ENCODE measurements at regions of chr1 and their contacts with region 1.

Region 1: GRCh38 chr1:27392096-27392777 is at the start of gene GPR3:
- DNase-seq: peak; percentile 82 to 95 (median 88)
- ATAC-seq: peak; percentile 97
- H3K4me3 ChIP-seq: peak within 1 kb of the TSS; percentile 57
- H3K4me3 Mint-ChIP-seq: peak within 1 kb of the TSS; percentile 76 to 90 (median 83)
- H3K27ac ChIP-seq: peak within 1 kb of the TSS; percentile 64
- H3K27ac Mint-ChIP-seq: peak within 1 kb of the TSS; percentile 54 to 98 (median 84)
- H3K4me1 ChIP-seq: peaks cover 9 to 18% of the 10 kb centered on the region in 2 donors
- H3K4me1 Mint-ChIP-seq: peaks cover 12 to 27% (median 20%) of the 10 kb centered on the region in 7 donors
- H3K27me3 ChIP-seq: no peaks in the 10 kb centered on the region
- H3K27me3 Mint-ChIP-seq: peaks cover 0 to 16% (median 0%) of the 10 kb centered on the region in 5 donors
- total RNA-seq, gene GPR3: 0.24 to 0.93 (median 0.45) TPM in 3 of 5 experiments, not detected in the others

Region 2: DNA sequence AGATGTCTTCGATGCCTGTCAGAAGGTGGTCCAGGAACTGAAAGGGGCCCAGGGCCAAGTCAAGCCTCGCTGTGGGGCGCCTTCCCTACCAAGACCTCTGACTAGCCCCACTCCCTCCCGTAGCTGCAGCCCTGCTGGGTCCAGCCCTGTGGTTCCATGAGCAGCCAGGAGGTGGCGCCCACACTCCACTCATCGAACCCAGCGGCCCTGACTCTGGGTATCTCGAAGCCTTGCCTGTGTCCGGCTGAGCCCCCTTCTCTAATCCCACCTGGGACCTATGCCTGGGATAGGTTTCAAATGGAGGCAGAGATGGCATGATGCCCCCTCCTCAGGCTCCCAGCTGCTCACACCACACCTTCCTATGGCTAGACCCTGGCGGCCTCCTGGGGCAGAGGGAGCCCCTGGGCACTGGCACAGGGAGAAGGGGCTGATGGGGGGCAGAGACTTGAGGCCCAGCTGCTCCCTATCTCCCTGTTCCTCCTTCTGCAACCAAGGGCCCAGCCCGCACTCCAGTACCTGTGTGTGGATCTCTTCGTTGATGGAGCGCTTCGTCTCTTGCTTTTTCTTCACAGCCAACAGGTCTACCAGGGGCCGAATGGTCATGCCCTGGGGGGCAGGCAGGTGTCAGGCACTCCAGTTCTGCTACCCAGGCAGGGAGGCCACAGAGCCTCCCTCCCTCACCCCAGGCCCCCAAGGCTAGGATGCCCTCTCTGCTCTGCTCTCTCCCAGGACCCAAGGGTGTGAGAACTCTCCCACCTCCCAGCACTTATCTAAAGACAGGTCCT is 289.3 kb before region 1 on chr1:
- CTCF ChIA-PET with region 1: interaction called, 4 read pairs
- POLR2A ChIA-PET with region 1: no interaction called
- intact Hi-C with region 1: loop called (anchors 2 to 5 kb)
- DNase-seq: peak; percentile 54 to 87 (median 76)
- ATAC-seq: peak; percentile 75
- H3K4me3 ChIP-seq: no peak overlapping the region
- H3K4me3 Mint-ChIP-seq: no peak overlapping the region
- H3K27ac ChIP-seq: no peak overlapping the region
- H3K27ac Mint-ChIP-seq: peak overlapping the region in 2 of 9 donors; percentile 45 to 57
- H3K4me1 ChIP-seq: no peaks in the 10 kb centered on the region
- H3K4me1 Mint-ChIP-seq: peaks cover 0 to 21% (median 3%) of the 10 kb centered on the region in 7 donors
- H3K27me3 ChIP-seq: no peaks in the 10 kb centered on the region
- H3K27me3 Mint-ChIP-seq: no peaks in the 10 kb centered on the region

Region 3: DNA sequence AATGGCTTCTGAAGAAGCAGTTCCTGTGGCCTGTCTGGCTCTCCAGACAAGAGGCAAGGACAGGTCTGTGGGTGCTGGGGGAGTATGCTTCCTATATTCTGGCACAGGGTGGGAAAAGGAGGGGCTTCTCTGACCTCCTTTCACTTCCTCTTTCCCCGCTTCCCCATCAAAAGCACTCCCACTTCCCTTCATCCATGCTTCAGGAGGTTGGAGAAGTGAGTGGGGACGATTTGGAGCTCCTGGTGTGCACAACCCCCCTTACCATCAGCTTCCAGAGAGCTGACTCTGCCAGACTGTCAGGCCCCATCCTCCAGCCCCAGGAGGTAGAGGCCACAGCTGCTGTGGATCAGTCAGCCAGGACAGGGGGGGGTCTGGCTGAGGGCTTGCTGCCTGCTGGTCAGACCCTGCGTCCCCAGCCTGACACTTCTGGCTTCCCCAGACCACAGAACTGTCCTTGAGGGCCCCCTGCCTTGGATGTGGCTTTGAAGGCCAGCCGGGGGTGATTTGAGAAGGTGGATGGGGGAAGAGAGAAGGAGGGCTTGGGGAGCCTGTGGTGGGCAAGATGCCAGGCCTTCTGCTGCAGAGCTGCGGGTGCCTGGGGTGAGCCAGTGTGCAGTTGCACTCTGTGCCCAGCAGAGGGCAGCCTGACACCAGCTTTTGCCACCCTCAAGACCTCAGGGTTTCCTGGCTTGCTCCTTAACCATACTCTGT is 91.7 kb before region 1 on chr1:
- CTCF ChIA-PET with region 1: interaction called, 184 read pairs
- POLR2A ChIA-PET with region 1: interaction called, 6 read pairs
- intact Hi-C with region 1: loop called (anchors 1 kb)
- DNase-seq: peak; percentile 66 to 84 (median 76)
- ATAC-seq: peak; percentile 95
- H3K4me3 ChIP-seq: no peak overlapping the region
- H3K4me3 Mint-ChIP-seq: no peak overlapping the region
- H3K27ac ChIP-seq: no peak overlapping the region
- H3K27ac Mint-ChIP-seq: no peak overlapping the region
- H3K4me1 ChIP-seq: no peaks in the 10 kb centered on the region
- H3K4me1 Mint-ChIP-seq: peaks cover 0 to 9% (median 3%) of the 10 kb centered on the region in 7 donors
- H3K27me3 ChIP-seq: no peaks in the 10 kb centered on the region
- H3K27me3 Mint-ChIP-seq: no peaks in the 10 kb centered on the region

Region 4: DNA sequence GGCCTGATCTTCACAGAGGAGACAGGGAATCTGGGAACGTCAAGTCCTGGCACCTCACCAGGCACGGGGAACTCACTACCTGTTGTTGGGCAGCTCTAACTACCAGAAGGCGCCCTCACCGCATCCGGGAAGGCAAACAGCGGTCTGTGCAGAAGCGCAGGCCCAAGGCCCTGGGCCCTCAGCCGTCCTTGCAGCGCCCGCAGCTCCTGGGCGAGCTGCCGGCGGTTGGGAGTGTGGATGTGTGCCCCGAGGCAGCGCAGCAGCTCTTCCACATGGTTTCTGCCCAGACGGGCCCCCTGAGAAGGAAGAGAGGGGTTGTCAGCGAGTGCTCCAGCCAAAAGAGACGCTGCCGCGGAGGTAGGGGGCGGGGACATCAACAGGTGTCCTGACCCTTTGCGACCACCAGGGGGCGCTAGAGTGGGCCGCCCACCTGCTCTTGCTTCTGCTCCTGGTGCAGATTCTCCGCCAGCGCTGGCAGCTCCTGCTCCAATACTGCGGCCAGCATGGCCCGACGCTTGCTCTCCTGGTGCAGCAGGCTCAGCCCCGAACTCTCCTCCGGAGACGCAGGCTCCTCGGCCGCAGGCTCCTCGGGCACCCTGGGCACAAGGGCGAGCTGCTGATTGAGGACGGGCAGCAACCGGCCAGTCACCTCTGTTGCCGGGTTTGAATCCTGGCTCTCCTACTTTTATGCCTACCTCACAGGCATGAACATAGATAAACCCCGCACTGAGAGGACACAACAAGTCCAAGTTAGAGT is 34.8 kb before region 1 on chr1:
- CTCF ChIA-PET with region 1: interaction called, 20 read pairs
- POLR2A ChIA-PET with region 1: no interaction called
- intact Hi-C with region 1: loop called (anchors 1 kb)
- DNase-seq: peak; percentile 76 to 89 (median 85)
- ATAC-seq: peak; percentile 94
- H3K4me3 ChIP-seq: peak overlapping the region; percentile 76
- H3K4me3 Mint-ChIP-seq: peak overlapping the region; percentile 74 to 88 (median 80)
- H3K27ac ChIP-seq: peak overlapping the region; percentile 70
- H3K27ac Mint-ChIP-seq: peak overlapping the region; percentile 62 to 90 (median 88)
- H3K4me1 ChIP-seq: peaks cover 37 to 41% of the 10 kb centered on the region in 2 donors
- H3K4me1 Mint-ChIP-seq: peaks cover 23 to 56% (median 45%) of the 10 kb centered on the region in 7 donors
- H3K27me3 ChIP-seq: no peaks in the 10 kb centered on the region
- H3K27me3 Mint-ChIP-seq: no peaks in the 10 kb centered on the region

Region 5: DNA sequence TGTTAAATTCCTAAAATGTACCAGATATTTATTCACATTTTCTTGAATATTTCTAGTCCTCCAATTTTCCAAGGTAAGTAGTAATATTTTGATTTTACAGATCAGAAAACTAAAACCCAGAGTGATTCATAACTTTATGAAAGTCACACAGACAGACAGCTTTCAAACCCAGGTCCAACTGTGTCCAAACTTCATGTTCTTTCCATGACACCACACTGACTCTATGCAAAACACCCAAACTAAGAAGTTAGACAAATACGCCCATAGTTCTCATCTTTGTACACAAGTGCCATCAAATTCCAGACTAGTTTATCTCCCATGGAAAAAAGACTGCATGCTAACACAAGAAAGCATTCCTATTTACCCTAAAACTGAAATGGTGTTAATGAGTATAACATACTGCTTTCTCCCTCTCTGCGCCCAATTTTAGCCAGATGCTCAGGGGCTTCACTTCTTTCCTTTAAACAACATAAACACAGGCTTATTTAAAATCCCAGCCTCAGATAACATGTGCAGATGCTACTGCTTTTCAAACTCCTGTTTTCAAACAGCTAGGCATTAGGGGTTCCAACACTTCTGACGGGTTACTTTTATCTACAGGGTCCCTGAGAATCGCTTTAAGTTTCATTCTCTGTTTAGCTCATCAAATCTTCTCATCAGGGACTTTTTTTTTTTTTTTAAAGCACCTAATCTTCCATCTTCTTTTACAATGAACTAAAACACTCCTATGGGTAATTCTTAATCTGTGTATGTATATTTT is 53.1 kb after region 1 on chr1:
- CTCF ChIA-PET with region 1: no interaction called
- POLR2A ChIA-PET with region 1: no interaction called
- intact Hi-C with region 1: no loop called
- DNase-seq: no peak
- ATAC-seq: peak; percentile 56
- H3K4me3 ChIP-seq: no peak overlapping the region
- H3K4me3 Mint-ChIP-seq: peak overlapping the region in 9 of 10 donors; percentile 28 to 75 (median 64)
- H3K27ac ChIP-seq: peak overlapping the region; percentile 42
- H3K27ac Mint-ChIP-seq: peak overlapping the region; percentile 62 to 87 (median 77)
- H3K4me1 ChIP-seq: peaks cover 0 to 20% of the 10 kb centered on the region in 2 donors
- H3K4me1 Mint-ChIP-seq: peaks cover 28 to 68% (median 50%) of the 10 kb centered on the region in 7 donors
- H3K27me3 ChIP-seq: no peaks in the 10 kb centered on the region
- H3K27me3 Mint-ChIP-seq: no peaks in the 10 kb centered on the region

Region 6: GRCh38 chr1:27584453-27584852 is 192.2 kb after region 1 on chr1:
- CTCF ChIA-PET with region 1: no interaction called
- POLR2A ChIA-PET with region 1: no interaction called
- intact Hi-C with region 1: no loop called
- DNase-seq: no peak
- ATAC-seq: no peak
- H3K4me3 ChIP-seq: no peak overlapping the region
- H3K4me3 Mint-ChIP-seq: no peak overlapping the region
- H3K27ac ChIP-seq: no peak overlapping the region
- H3K27ac Mint-ChIP-seq: no peak overlapping the region
- H3K4me1 ChIP-seq: no peaks in the 10 kb centered on the region
- H3K4me1 Mint-ChIP-seq: peaks cover 4 to 29% (median 16%) of the 10 kb centered on the region in 7 donors
- H3K27me3 ChIP-seq: no peaks in the 10 kb centered on the region
- H3K27me3 Mint-ChIP-seq: no peaks in the 10 kb centered on the region

Measured in naive thymus-derived CD4-positive, alpha-beta T cell (primary cell).